HEK293 (cell line): ENCODE measurements at regions of chr22 and their contacts with region 1.

Region 1: DNA sequence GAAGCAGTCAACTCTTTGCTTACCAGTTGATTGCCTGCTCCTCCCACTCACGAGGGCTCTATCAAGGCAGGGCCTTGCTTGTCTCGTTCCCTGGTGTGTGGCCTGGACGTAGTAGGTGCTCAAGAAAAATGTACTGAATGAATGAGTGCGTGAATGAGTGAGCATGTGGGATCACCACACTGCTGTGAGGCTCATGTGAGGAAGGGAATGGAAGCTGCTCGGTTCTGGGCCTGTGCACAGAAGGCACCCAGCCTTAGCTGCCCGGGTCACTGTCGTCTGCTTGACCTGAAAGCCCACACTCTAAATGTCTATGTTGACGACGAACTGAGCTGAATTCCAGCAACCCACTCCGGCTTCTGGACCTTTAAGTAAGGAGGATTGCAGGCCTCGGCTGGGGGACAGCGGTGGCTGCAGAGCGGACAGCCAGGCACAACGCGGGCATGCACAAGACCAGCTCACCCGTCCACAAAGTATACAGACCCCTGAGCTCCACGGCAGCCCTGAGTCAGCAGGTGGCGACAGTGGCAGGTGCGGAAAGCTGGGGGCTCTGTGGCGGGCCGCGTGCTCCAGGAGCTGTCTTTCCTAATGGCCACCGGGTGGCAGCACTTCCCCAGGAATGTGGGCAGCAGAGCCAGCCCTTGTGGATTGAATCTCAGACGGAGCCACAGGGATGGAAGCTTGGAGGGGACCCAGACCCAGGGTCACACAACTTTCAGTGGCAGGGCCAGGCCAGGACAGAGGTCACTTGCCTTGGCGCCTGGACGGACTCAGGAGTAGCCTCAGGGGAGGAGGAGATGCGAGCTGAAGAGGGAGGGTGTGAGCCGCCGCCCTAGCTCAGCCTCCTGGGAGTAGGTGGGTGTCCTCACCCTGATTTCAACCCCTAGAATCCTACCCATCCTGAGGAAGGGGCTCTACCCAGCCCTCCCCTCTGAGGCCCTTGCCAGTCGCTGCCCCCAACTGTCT is 5.0 kb upstream of the PICK1 start:
- H3K4me3 ChIP-seq: no peak overlapping the region
- H3K27ac ChIP-seq: no peak overlapping the region
- H3K4me1 ChIP-seq: no peaks in the 10 kb centered on the region
- CTCF ChIP-seq: peak; percentile 97

Region 2: GRCh38 chr22:38034274-38034882 is 17.8 kb before region 1 on chr22:
- CTCF ChIA-PET with region 1: interaction called, 19 read pairs
- POLR2A ChIA-PET with region 1: interaction called, 8 read pairs
- H3K4me3 ChIP-seq: no peak overlapping the region
- H3K27ac ChIP-seq: no peak overlapping the region; the same call in 1 of the 2 replicates
- H3K4me1 ChIP-seq: no peaks in the 10 kb centered on the region
- CTCF ChIP-seq: no peak

Region 3: DNA sequence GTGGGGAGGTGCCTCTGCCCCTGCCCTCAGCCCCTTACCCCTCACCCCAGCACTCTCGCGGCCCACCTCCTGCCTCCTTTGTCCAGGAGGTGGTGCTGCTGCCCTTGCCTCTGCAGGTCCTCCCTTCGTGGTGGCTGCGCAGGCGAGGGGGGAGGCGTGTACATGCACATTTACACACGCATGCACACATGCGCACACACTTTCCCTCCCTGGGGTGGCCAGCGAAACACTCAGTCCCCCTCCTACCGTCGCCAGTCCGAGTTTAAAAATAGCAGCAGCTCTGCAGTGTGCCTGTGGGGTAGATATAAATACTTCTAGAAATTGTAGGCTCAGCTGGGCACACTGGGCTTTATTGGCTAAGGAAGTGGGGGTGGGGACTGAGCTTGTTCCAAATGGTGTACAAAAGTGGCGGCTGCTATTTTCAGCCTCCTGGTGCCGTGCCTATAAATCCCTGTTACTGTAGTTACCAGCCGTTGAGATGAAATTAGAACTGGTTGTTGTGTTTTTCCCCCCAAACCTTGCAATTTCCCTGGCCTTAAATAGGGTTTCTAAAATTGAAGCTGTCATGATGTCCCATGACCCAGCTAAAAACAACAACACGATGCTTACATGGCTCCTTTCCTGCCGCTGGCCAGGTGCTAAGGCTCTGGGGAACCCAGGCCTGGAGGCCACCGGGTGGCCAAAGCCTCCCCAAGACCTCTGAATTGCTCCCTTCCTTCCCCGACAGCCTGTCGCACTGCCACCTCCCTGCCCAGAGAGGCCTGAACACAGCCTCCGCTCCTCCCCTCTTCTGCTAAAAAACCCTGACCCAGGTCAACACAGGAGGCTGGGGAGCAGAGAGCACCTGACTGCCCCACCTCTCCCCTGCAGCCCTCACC is 17.4 kb after region 1 on chr22:
- CTCF ChIA-PET with region 1: interaction called, 16 read pairs
- POLR2A ChIA-PET with region 1: no interaction called
- H3K4me3 ChIP-seq: no peak overlapping the region
- H3K27ac ChIP-seq: no peak overlapping the region
- H3K4me1 ChIP-seq: no peaks in the 10 kb centered on the region
- CTCF ChIP-seq: peak; percentile 46; the same call in 1 of the 2 replicates

Region 4: GRCh38 chr22:38104084-38104483 is 51.9 kb after region 1 on chr22:
- CTCF ChIA-PET with region 1: interaction called, 46 read pairs
- POLR2A ChIA-PET with region 1: no interaction called
- H3K4me3 ChIP-seq: no peak overlapping the region
- H3K27ac ChIP-seq: no peak overlapping the region
- H3K4me1 ChIP-seq: no peaks in the 10 kb centered on the region
- CTCF ChIP-seq: no peak

Region 5: GRCh38 chr22:38353142-38353629 is 301.0 kb after region 1 on chr22:
- CTCF ChIA-PET with region 1: interaction called, 11 read pairs
- POLR2A ChIA-PET with region 1: no interaction called
- H3K4me3 ChIP-seq: no peak overlapping the region
- H3K27ac ChIP-seq: no peak overlapping the region
- H3K4me1 ChIP-seq: no peaks in the 10 kb centered on the region
- CTCF ChIP-seq: peak; percentile 90